ENCODE measurements at regions of chr13 and their contacts with region 1.

Region 1: GRCh38 chr13:99528547-99528946 is 27.3 kb downstream of the TM9SF2 start:
- DNase-seq: peak; percentile 64
- H3K4me3 Mint-ChIP-seq: no peak overlapping the region
- H3K27ac Mint-ChIP-seq: no peak overlapping the region
- H3K4me1 Mint-ChIP-seq: peaks cover 29% of the 10 kb centered on the region
- H3K27me3 Mint-ChIP-seq: no peaks in the 10 kb centered on the region

Region 2: GRCh38 chr13:99542788-99543406 is 14.3 kb after region 1 on chr13:
- CTCF ChIA-PET with region 1: no interaction called
- intact Hi-C with region 1: loop called (anchors 2 kb)
- DNase-seq: peak; percentile 80
- H3K4me3 Mint-ChIP-seq: no peak overlapping the region
- H3K27ac Mint-ChIP-seq: no peak overlapping the region
- H3K4me1 Mint-ChIP-seq: peaks cover 47% of the 10 kb centered on the region
- H3K27me3 Mint-ChIP-seq: no peaks in the 10 kb centered on the region

Region 3: DNA sequence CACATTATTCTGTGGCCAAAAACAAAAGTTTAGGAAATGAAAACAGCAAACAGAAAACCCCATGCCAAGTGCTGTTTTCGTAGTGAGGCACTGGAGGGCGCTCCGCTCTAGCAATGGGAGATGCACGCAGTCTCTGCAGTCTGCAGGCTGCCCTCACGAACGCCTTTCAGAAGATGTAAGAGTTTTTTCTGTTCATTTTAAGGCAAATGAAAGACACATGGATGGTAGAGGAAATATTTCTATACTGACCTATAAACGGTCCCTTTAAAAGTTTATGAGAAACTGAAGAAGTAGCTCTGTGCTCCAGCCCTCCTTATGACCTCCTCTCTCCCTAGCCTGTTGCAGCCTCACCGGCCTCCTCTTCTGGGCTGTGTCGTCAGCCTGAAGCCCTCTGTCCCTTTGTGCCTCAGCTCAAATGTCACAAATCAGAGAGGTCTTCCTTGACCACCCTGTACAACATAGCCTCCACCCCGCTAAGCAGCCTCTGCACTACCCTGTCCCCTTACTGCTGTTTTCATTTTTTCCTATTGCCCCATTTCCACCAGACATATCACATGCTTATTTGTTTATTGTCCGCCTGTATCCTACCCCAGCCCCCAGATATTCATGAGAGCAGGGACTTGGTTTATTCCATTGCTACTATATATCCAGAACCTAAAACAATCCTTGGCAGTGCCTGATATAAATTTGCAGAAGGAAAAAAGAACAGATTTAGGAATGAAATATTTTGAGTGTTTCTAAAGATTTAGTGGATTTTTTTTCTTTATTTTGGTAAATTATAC is 89.1 kb after region 1 on chr13:
- CTCF ChIA-PET with region 1: interaction called, 7 read pairs
- intact Hi-C with region 1: loop called (anchors 1 kb)
- DNase-seq: peak; percentile 51
- H3K4me3 Mint-ChIP-seq: no peak overlapping the region
- H3K27ac Mint-ChIP-seq: no peak overlapping the region
- H3K4me1 Mint-ChIP-seq: peaks cover 11% of the 10 kb centered on the region
- H3K27me3 Mint-ChIP-seq: no peaks in the 10 kb centered on the region